MCF 10A (cell line): ENCODE measurements at regions of chr6 and their contacts with region 1.

Region 1: DNA sequence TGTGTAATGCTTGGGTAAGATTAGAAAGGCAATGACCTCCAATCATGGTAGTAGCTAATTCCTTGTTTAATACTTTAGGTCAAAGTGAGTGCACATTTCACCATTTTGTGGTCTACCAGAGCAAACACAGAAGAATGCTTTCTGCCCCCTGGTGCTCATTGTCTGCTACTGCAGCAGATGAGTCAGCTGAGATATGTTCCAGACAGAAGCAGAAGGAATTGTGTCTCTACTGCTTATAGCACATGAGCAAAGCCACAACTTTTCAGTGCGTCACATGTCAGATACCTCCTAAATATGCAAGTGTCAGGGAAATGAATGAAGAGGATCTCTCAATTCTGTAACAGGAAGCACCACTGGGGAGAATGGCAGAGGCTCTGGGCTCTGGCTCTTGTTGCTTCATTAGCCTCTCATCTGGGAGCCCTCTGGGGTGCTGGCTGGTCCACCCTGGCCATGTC is 308.9 kb downstream of the ALDH8A1 start:
- DNase-seq: peak; percentile 95
- H3K4me3 Mint-ChIP-seq: no peak overlapping the region
- H3K27ac Mint-ChIP-seq: peak overlapping the region; percentile 81
- H3K4me1 Mint-ChIP-seq: peaks cover 25% of the 10 kb centered on the region
- H3K27me3 Mint-ChIP-seq: no peaks in the 10 kb centered on the region
- CTCF ChIP-seq: peak; percentile 79

Region 2: DNA sequence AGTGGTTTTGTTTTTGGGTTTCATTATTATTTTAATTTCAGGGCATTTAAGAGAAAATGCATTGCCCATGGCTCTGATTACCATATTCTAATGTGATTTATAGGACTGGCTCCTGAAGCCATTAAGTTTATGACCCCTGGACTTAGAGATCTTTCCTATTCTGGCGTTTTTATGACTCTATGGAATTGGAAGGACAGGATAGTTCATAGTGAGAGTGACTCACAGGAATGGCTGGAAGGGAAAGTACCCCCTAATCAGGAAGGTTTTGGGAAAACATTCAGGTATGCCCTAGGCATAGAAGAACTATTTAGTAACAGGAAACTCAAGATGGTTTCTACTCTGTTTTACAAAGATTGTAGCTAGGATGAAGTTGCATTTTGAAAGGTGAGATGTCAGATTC is 480.0 kb before region 1 on chr6:
- CTCF ChIA-PET with region 1: interaction called, 11 read pairs
- POLR2A ChIA-PET with region 1: interaction called, 3 read pairs
- intact Hi-C with region 1: no loop called
- DNase-seq: peak; percentile 46
- H3K4me3 Mint-ChIP-seq: no peak overlapping the region
- H3K27ac Mint-ChIP-seq: no peak overlapping the region
- H3K4me1 Mint-ChIP-seq: peaks cover 6% of the 10 kb centered on the region
- H3K27me3 Mint-ChIP-seq: no peaks in the 10 kb centered on the region
- CTCF ChIP-seq: no peak

Region 3: DNA sequence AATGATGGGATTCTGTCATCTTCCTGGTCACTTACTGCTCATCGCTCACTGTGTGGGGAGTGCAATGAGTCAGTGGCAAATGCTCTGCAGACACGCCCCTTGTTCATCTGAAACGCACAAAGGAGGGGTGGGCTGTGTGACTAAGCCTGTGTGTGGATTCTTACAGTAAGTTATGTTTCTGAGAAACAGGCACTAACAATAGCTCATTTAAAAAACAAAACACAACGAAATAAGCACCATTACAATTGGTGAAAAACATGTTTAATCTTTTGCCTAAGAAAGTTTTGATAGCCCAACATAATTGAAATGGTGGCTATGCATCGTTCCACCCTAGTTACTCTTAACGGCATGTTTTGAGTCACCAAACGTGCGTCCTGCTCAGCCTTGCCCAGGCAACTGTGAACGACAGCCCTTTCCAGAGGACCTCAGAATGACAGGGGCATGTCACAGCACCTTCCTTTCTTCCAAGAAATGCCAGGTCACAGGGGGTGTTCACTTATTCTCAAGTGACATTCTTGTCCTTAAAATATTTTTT is 204.7 kb before region 1 on chr6:
- CTCF ChIA-PET with region 1: no interaction called
- POLR2A ChIA-PET with region 1: interaction called, 6 read pairs
- intact Hi-C with region 1: loop called (anchors 1 kb)
- DNase-seq: peak; percentile 94
- H3K4me3 Mint-ChIP-seq: peak overlapping the region; percentile 43
- H3K27ac Mint-ChIP-seq: peak overlapping the region; percentile 88
- H3K4me1 Mint-ChIP-seq: peaks cover 24% of the 10 kb centered on the region
- H3K27me3 Mint-ChIP-seq: no peaks in the 10 kb centered on the region
- CTCF ChIP-seq: no peak

Region 4: GRCh38 chr6:134508862-134509498 is 132.0 kb before region 1 on chr6:
- CTCF ChIA-PET with region 1: interaction called, 10 read pairs
- POLR2A ChIA-PET with region 1: interaction called, 3 read pairs
- intact Hi-C with region 1: no loop called
- DNase-seq: peak; percentile 70
- H3K4me3 Mint-ChIP-seq: peak overlapping the region; percentile 7
- H3K27ac Mint-ChIP-seq: peak overlapping the region; percentile 65
- H3K4me1 Mint-ChIP-seq: peaks cover 9% of the 10 kb centered on the region
- H3K27me3 Mint-ChIP-seq: no peaks in the 10 kb centered on the region
- CTCF ChIP-seq: no peak

Region 5: DNA sequence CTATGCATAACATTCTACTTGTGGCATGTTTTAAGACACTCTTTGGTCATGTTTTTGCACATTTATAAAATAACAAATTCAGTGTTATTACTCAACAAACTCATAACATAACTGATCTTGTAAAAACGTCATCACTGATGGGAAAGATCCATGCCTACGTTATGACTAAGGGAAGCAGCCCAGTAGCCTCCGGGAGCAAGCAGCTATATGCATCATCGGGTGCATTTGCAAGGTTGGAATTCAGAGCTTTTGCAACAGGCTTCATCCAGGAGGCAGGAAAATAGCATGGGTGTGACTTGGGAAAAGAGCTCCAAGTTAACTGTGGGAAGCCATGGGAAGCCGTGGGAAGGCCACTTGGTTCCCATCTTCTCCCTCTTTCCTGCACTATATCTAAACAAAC is 51.5 kb before region 1 on chr6:
- CTCF ChIA-PET with region 1: interaction called, 5 read pairs
- POLR2A ChIA-PET with region 1: interaction called, 14 read pairs
- intact Hi-C with region 1: no loop called
- DNase-seq: peak; percentile 99
- H3K4me3 Mint-ChIP-seq: no peak overlapping the region
- H3K27ac Mint-ChIP-seq: peak overlapping the region; percentile 95
- H3K4me1 Mint-ChIP-seq: peaks cover 36% of the 10 kb centered on the region
- H3K27me3 Mint-ChIP-seq: no peaks in the 10 kb centered on the region
- CTCF ChIP-seq: no peak